Astrocyte of the cerebellum (primary cell): ENCODE measurements at regions of chr18 and their contacts with region 1.

Region 1: DNA sequence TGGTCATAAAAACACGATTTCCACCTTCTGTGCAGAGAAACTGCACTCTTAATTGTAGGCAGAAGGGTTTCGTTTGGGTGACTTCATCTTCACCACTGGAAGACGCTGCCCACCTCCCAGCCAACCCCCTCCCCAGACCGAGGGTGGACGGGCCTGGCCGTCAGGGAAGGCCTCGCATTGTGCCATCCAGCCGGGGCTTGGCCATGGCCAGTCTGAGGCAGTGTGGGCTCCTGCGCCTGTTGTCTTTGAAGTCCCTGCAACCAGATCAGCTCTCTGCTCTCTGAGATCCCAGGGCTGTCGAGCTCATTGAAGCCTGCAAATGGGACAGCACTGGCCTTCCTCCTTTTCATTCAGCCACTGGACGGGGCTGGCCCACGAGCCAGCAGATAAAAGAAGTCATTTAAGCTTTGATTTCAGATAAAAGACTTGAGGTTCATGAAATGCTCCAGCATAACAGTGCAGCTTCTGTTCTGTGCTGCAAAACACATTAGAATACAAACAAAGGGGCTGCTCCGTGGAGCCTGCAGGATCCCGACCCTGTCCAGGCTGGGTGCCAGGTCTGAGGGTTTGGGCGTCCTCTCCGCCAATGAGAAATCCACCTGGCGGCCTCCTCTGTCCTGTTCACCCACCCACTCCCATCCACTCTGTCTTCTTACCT is 253.5 kb downstream of the LDLRAD4 start:
- DNase-seq: no peak
- H3K4me3 ChIP-seq: no peak overlapping the region
- CTCF ChIP-seq: no peak

Region 2: DNA sequence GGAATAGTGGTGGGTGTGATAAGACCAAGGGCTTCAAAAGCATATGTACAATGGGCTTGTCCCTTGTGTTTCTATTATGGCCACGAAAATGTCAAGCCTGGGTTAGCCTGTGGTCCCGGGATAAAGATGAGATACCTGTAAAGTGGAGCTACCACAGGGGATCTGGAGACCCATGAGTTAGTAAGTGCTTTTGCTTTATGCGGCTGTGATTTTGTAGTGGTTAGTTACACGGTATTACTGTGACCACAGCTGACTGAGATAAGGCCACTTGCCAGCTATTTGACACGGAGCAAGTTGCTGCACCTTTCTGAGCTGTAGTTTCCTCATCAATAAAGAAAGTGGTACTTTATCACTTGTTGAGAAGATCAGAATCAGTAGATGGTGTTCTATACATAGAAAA is 965.1 kb before region 1 on chr18:
- in situ Hi-C with region 1: no loop called
- DNase-seq: no peak
- H3K4me3 ChIP-seq: no peak overlapping the region
- CTCF ChIP-seq: no peak

Region 3: DNA sequence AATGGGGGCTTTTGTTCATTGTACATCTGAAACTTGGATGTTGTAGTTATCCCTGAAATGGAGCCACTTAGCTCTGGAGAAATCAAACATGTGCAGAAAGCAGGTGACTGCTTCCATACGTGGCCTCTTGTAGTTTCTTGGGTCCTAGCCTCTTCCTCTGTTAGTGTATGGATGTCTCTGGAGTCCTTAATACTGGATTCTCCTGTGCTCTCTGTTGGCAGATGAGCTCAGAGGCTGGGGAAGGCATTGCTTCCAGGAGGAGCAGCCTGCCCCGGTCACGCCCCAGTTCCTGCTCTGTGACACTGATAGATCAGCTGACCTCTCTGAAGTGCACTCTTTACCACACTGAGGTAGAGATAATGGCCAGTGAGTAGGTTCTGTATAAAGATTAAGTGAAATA is 77.3 kb before region 1 on chr18:
- in situ Hi-C with region 1: loop called (anchors 5 kb)
- DNase-seq: no peak
- H3K4me3 ChIP-seq: no peak overlapping the region
- CTCF ChIP-seq: no peak

Region 4: GRCh38 chr18:13558124-13558523 is 86.0 kb after region 1 on chr18:
- in situ Hi-C with region 1: no loop called
- DNase-seq: no peak
- H3K4me3 ChIP-seq: no peak overlapping the region
- CTCF ChIP-seq: peak; percentile 68